ENCODE measurements at regions of chr21 and their contacts with region 1.

Region 1: GRCh38 chr21:37463083-37463801 is 96.7 kb downstream of the DYRK1A start:
- DNase-seq: no peak
- H3K4me3 ChIP-seq: peak overlapping the region in 1 of 8 donors; percentile 29
- H3K27ac ChIP-seq: peak overlapping the region in 4 of 8 donors; percentile 29 to 70 (median 58)
- H3K4me1 ChIP-seq: peaks cover 45 to 99% (median 76%) of the 10 kb centered on the region in 6 donors
- H3K27me3 ChIP-seq: no peaks in the 10 kb centered on the region
- CTCF ChIP-seq: peak in 10 of 11 experiments; percentile 25 to 88 (median 60)
- POLR2A ChIP-seq: no peak

Region 2: DNA sequence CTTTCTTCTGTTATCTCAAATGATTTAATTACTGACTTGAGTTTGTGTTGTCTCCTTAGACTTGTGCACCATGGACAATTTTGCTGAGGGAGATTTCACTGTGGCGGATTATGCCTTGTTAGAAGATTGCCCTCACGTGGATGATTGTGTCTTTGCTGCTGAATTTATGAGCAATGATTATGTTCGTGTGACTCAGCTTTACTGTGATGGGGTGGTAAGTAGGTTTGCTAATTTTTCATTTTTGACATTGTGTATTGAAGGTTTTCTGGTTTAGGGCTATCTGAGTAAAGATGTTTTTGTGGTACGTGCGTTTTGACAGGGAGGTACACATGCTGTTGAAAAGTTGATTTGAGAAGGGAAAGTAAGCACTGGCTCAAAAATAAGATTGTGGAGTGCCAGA is 376.1 kb before region 1 on chr21:
- intact Hi-C with region 1: no loop called
- DNase-seq: no peak
- H3K4me3 ChIP-seq: no peak overlapping the region
- H3K27ac ChIP-seq: no peak overlapping the region
- H3K4me1 ChIP-seq: peaks cover 0 to 43% (median 8%) of the 10 kb centered on the region in 6 donors
- H3K27me3 ChIP-seq: no peaks in the 10 kb centered on the region
- CTCF ChIP-seq: no peak
- POLR2A ChIP-seq: no peak

Region 3: GRCh38 chr21:37370152-37371040 is 92.8 kb before region 1 on chr21:
- intact Hi-C with region 1: loop called (anchors 10 kb)
- DNase-seq: no peak
- H3K4me3 ChIP-seq: peak overlapping the region in 6 of 8 donors; percentile 6 to 88 (median 10)
- H3K27ac ChIP-seq: peak overlapping the region; percentile 32 to 100 (median 86)
- H3K4me1 ChIP-seq: peaks cover 51 to 77% (median 72%) of the 10 kb centered on the region in 6 donors
- H3K27me3 ChIP-seq: no peaks in the 10 kb centered on the region
- CTCF ChIP-seq: no peak
- POLR2A ChIP-seq: no peak

Region 4: DNA sequence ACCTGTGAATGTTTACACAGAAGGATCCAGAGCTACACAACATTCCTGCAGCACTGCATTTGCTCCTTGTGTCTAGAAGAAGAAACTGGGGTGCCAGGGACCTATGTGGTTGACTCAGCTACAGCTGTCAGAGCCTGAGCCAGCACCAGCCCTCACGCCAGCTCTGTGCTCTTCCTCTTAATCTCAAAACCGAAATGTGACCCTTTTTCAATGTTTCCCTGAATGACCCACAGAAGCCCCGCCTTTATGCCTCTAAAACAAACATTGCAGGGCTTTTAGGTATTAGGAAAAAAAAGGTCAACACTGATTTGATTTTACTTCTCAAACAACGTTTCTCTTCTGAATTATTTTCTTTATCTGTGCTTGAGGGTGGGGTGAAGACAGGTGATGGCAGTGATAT is 163.8 kb after region 1 on chr21:
- intact Hi-C with region 1: no loop called
- DNase-seq: no peak
- H3K4me3 ChIP-seq: no peak overlapping the region
- H3K27ac ChIP-seq: no peak overlapping the region
- H3K4me1 ChIP-seq: peaks cover 0 to 12% (median 0%) of the 10 kb centered on the region in 6 donors
- H3K27me3 ChIP-seq: peaks cover 0 to 16% (median 0%) of the 10 kb centered on the region in 7 donors
- CTCF ChIP-seq: no peak
- POLR2A ChIP-seq: no peak

Region 5: GRCh38 chr21:37886120-37886519 is 422.9 kb after region 1 on chr21:
- intact Hi-C with region 1: no loop called
- DNase-seq: no peak
- H3K4me3 ChIP-seq: no peak overlapping the region
- H3K27ac ChIP-seq: no peak overlapping the region
- H3K4me1 ChIP-seq: no peaks in the 10 kb centered on the region
- H3K27me3 ChIP-seq: peaks cover 0 to 20% (median 0%) of the 10 kb centered on the region in 7 donors
- CTCF ChIP-seq: no peak
- POLR2A ChIP-seq: no peak